ENCODE measurements at regions of chr4 and their contacts with region 1.

Region 1: GRCh38 chr4:40719008-40719623 is 30.6 kb upstream of the NSUN7 start:
- DNase-seq: no peak
- ATAC-seq: peak; percentile 63
- H3K4me3 Mint-ChIP-seq: no peak overlapping the region
- H3K27ac Mint-ChIP-seq: no peak overlapping the region
- H3K4me1 Mint-ChIP-seq: peaks cover 13% of the 10 kb centered on the region
- H3K27me3 Mint-ChIP-seq: peaks cover 2% of the 10 kb centered on the region
- CTCF ChIP-seq: peak; percentile 40

Region 2: GRCh38 chr4:40550948-40551462 is 168.1 kb before region 1 on chr4:
- CTCF ChIA-PET with region 1: interaction called, 5 read pairs
- POLR2A ChIA-PET with region 1: no interaction called
- intact Hi-C with region 1: loop called (anchors 10 kb)
- DNase-seq: peak; percentile 32
- ATAC-seq: peak; percentile 77
- H3K4me3 Mint-ChIP-seq: peak overlapping the region; percentile 59
- H3K27ac Mint-ChIP-seq: peak overlapping the region; percentile 63
- H3K4me1 Mint-ChIP-seq: peaks cover 19% of the 10 kb centered on the region
- H3K27me3 Mint-ChIP-seq: no peaks in the 10 kb centered on the region
- CTCF ChIP-seq: peak; percentile 34

Region 3: DNA sequence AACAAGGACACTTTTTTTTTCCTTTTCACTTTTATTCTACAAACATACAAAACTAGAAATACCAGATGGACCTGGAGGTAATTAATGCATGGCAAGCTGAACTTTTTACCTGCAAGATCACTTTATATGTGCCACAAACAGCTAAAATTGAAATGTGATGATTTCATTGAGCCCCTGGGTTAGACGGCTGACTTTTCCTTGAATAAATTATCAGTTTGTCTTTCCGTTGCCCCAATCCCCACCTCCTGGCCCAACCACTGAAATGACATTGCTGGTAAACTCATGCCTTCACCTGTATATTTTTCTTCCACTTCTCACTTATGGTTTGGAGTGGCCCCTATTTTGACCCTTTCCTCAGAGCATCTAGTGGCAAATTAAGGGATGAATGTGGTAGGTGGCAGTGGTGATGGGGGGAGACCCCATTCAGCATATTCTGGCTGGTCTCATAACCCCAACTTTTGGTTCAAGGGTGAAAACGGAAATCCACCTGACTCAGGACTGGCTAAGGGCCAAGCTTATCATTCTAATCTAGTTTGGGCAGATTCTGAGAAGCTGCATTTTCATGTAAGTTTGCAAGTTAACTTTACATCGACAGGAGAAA is 16.5 kb before region 1 on chr4:
- CTCF ChIA-PET with region 1: interaction called, 10 read pairs
- POLR2A ChIA-PET with region 1: no interaction called
- intact Hi-C with region 1: no loop called
- DNase-seq: peak; percentile 52
- ATAC-seq: peak; percentile 68
- H3K4me3 Mint-ChIP-seq: no peak overlapping the region
- H3K27ac Mint-ChIP-seq: peak overlapping the region; percentile 14
- H3K4me1 Mint-ChIP-seq: peaks cover 28% of the 10 kb centered on the region
- H3K27me3 Mint-ChIP-seq: no peaks in the 10 kb centered on the region
- CTCF ChIP-seq: no peak